ENCODE measurements at regions of chr1 and their contacts with region 1.

Region 1: DNA sequence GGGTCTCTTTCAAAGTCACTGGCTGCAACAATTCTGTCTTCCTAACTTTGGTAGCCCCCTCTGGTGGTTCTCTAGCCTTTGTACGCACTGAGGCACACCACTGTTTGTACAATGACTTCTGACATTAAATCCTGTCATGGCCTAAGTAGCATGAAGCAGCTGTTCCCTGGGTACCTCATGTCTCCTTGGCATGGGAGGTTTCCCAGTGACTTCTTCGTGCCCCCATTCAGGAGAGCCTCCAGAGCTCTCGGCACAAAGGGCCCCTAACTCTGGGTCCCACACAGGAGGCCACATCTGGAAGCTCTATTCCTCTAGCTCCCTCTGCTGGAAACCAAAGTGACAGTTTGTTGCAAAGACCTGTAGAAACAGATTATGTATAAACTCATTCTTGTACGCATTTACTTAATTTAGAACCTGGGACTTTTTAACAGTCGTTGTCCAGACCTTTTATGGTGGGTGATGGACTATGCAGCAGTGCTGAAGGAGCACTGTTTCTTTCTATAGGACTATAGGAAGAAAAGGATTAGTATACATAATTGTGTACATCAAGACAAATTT is 13.4 kb downstream of the SWT1 start:
- DNase-seq: peak in 8 of 9 donors; percentile 37 to 71 (median 65)
- ATAC-seq: peak; percentile 84
- H3K4me3 ChIP-seq: no peak overlapping the region
- H3K4me3 Mint-ChIP-seq: peak overlapping the region in 4 of 10 donors; percentile 35 to 56 (median 53)
- H3K27ac ChIP-seq: no peak overlapping the region
- H3K27ac Mint-ChIP-seq: peak overlapping the region in 4 of 9 donors; percentile 6 to 62 (median 43)
- H3K4me1 ChIP-seq: peaks cover 0 to 4% of the 10 kb centered on the region in 2 donors
- H3K4me1 Mint-ChIP-seq: peaks cover 0 to 17% (median 5%) of the 10 kb centered on the region in 7 donors
- H3K27me3 ChIP-seq: no peaks in the 10 kb centered on the region
- H3K27me3 Mint-ChIP-seq: no peaks in the 10 kb centered on the region

Region 2: GRCh38 chr1:184945029-184945428 is 225.3 kb before region 1 on chr1:
- CTCF ChIA-PET with region 1: no interaction called
- POLR2A ChIA-PET with region 1: no interaction called
- intact Hi-C with region 1: no loop called
- DNase-seq: no peak
- ATAC-seq: peak; percentile 45
- H3K4me3 ChIP-seq: no peak overlapping the region
- H3K4me3 Mint-ChIP-seq: no peak overlapping the region
- H3K27ac ChIP-seq: no peak overlapping the region
- H3K27ac Mint-ChIP-seq: no peak overlapping the region
- H3K4me1 ChIP-seq: no peaks in the 10 kb centered on the region
- H3K4me1 Mint-ChIP-seq: peaks cover 0 to 10% (median 0%) of the 10 kb centered on the region in 7 donors
- H3K27me3 ChIP-seq: no peaks in the 10 kb centered on the region
- H3K27me3 Mint-ChIP-seq: no peaks in the 10 kb centered on the region

Region 3: GRCh38 chr1:184982002-184982954 is 188.1 kb before region 1 on chr1:
- CTCF ChIA-PET with region 1: interaction called, 4 read pairs
- POLR2A ChIA-PET with region 1: no interaction called
- intact Hi-C with region 1: loop called (anchors 1 to 5 kb)
- DNase-seq: peak; percentile 28 to 69 (median 47)
- ATAC-seq: peak; percentile 99
- H3K4me3 ChIP-seq: no peak overlapping the region
- H3K4me3 Mint-ChIP-seq: no peak overlapping the region
- H3K27ac ChIP-seq: no peak overlapping the region
- H3K27ac Mint-ChIP-seq: no peak overlapping the region
- H3K4me1 ChIP-seq: no peaks in the 10 kb centered on the region
- H3K4me1 Mint-ChIP-seq: peaks cover 0 to 7% (median 0%) of the 10 kb centered on the region in 7 donors
- H3K27me3 ChIP-seq: no peaks in the 10 kb centered on the region
- H3K27me3 Mint-ChIP-seq: peaks cover 17 to 45% (median 29%) of the 10 kb centered on the region in 5 donors

Region 4: GRCh38 chr1:185694081-185694480 is 523.7 kb after region 1 on chr1:
- CTCF ChIA-PET with region 1: interaction called, 3 read pairs
- POLR2A ChIA-PET with region 1: no interaction called
- intact Hi-C with region 1: loop called in 1 of 2 experiments (anchors 1 kb)
- DNase-seq: peak in 4 of 9 donors; percentile 20 to 26 (median 22)
- ATAC-seq: peak; percentile 60
- H3K4me3 ChIP-seq: peak overlapping the region; percentile 31
- H3K4me3 Mint-ChIP-seq: peak overlapping the region; percentile 73 to 85 (median 78)
- H3K27ac ChIP-seq: peak overlapping the region; percentile 50
- H3K27ac Mint-ChIP-seq: peak overlapping the region; percentile 77 to 96 (median 88)
- H3K4me1 ChIP-seq: peaks cover 0 to 17% of the 10 kb centered on the region in 2 donors
- H3K4me1 Mint-ChIP-seq: peaks cover 11 to 27% (median 14%) of the 10 kb centered on the region in 7 donors
- H3K27me3 ChIP-seq: no peaks in the 10 kb centered on the region
- H3K27me3 Mint-ChIP-seq: peaks cover 0 to 27% (median 9%) of the 10 kb centered on the region in 5 donors

Measured in naive thymus-derived CD4-positive, alpha-beta T cell (primary cell).